HepG2 (cell line): ENCODE measurements at regions of chr4 and their contacts with region 1.

Region 1: GRCh38 chr4:145216535-145216934 is 36.1 kb upstream of the OTUD4 start:
- DNase-seq: no peak
- ATAC-seq: no peak
- H3K4me3 ChIP-seq: no peak overlapping the region
- H3K27ac ChIP-seq: no peak overlapping the region
- H3K4me1 ChIP-seq: no peaks in the 10 kb centered on the region
- H3K27me3 ChIP-seq: no peaks in the 10 kb centered on the region; a peak in 2 of 5 replicates
- CTCF ChIP-seq: peak; percentile 53
- EP300 ChIP-seq: no peak
- POLR2A ChIP-seq: no peak
- RAD21 ChIP-seq: no peak

Region 2: DNA sequence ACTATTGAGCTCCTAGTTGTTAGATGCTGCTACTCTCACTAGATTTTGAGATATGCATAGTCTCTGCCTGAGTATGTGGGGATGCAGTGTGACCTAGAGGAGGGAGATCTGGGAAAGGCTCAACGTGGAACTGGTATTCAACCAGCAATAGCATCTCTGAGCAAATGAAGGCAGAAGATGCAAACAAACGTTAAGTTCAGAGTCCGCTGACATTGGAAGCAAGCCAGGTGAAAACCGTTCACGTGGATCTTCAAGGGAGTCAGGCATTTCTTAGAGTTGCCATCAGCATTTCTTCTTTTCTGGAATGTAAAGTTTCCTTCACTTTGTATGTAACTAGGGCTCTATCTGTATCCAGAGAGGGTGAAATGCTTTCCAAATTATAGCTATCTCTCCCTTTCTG is 523.3 kb after region 1 on chr4:
- CTCF ChIA-PET with region 1: no interaction called
- POLR2A ChIA-PET with region 1: no interaction called
- in situ Hi-C with region 1: no loop called
- intact Hi-C with region 1: loop called (anchors 10 kb)
- DNase-seq: no peak
- ATAC-seq: peak; percentile 19; the same call in 1 of the 3 replicates
- H3K4me3 ChIP-seq: no peak overlapping the region
- H3K27ac ChIP-seq: no peak overlapping the region
- H3K4me1 ChIP-seq: peaks cover 15% of the 10 kb centered on the region
- H3K27me3 ChIP-seq: peaks cover 0 to 16% of the 10 kb centered on the region in 2 experiments; a peak in 2 of 5 replicates
- CTCF ChIP-seq: no peak
- EP300 ChIP-seq: no peak
- POLR2A ChIP-seq: no peak
- RAD21 ChIP-seq: no peak